Caco-2 (cell line): ENCODE measurements at regions of chr19 and their contacts with region 1.

Region 1: GRCh38 chr19:52748336-52748950 is 13.6 kb upstream of the ZNF611 start:
- DNase-seq: peak in 1 of 2 experiments; percentile 50
- H3K4me3 ChIP-seq: no peak overlapping the region
- H3K4me3 Mint-ChIP-seq: no peak overlapping the region
- H3K27ac Mint-ChIP-seq: no peak overlapping the region
- H3K4me1 ChIP-seq: peaks cover 5% of the 10 kb centered on the region; the same call in 1 of the 2 replicates
- H3K4me1 Mint-ChIP-seq: peaks cover 6% of the 10 kb centered on the region
- H3K27me3 ChIP-seq: no peaks in the 10 kb centered on the region
- H3K27me3 Mint-ChIP-seq: no peaks in the 10 kb centered on the region
- CTCF ChIP-seq: peak; percentile 16 to 41

Region 2: GRCh38 chr19:52248241-52248640 is 500.2 kb before region 1 on chr19:
- CTCF ChIA-PET with region 1: no interaction called
- POLR2A ChIA-PET with region 1: no interaction called
- intact Hi-C with region 1: loop called (anchors 10 kb)
- DNase-seq: peak; percentile 32 to 42
- H3K4me3 ChIP-seq: no peak overlapping the region
- H3K4me3 Mint-ChIP-seq: no peak overlapping the region
- H3K27ac Mint-ChIP-seq: no peak overlapping the region
- H3K4me1 ChIP-seq: no peaks in the 10 kb centered on the region
- H3K4me1 Mint-ChIP-seq: no peaks in the 10 kb centered on the region
- H3K27me3 ChIP-seq: no peaks in the 10 kb centered on the region
- H3K27me3 Mint-ChIP-seq: no peaks in the 10 kb centered on the region
- CTCF ChIP-seq: peak; percentile 10 to 15

Region 3: DNA sequence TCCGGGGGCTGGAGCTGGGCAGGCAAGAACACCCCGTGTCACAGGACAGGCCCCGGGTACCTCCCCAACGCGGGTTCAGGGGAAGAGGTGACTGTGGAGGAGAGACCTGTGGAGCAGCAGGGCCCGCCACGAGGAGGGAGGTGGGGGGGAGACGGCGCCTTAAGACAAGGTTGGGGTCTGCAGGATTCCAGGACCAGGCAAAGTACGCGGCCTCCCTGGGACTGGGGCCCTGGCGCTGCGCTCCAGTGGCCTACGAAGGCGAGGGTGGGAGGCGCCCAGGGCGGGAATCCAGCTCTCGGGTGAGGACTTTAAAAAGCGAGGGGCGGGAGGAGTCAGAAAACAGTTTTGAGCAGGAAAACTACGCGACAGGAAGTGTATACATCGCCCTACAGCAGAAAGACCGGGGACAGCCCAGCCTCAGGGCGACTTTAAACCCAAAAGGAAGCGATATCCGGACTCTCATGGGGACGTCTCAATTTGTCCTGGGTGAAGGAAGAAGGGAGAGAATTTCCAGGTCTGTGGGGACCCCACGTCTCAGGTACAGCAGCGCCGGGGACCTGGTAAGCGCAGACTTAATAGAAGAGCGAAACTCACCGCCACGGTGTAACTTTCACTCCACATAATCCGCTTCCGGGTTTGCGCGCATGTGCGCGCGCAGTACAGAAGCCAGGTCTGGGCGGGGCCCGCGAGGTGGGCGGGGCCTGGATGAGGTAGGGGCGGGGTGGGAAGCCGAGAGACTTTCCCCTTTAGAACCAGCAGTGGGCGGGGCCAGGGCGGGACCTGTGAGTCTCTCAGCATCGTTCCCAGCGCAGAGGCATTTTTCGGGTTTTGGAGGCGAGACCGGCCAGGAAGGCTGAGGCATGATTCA is 110.5 kb before region 1 on chr19 and contains the start of gene ZNF83:
- CTCF ChIA-PET with region 1: no interaction called
- POLR2A ChIA-PET with region 1: no interaction called
- intact Hi-C with region 1: loop called (anchors 1 kb)
- DNase-seq: peak; percentile 96 to 97
- H3K4me3 ChIP-seq: peak within 1 kb of the TSS; percentile 47
- H3K4me3 Mint-ChIP-seq: peak within 1 kb of the TSS; percentile 85
- H3K27ac Mint-ChIP-seq: peak within 1 kb of the TSS; percentile 93
- H3K4me1 ChIP-seq: peaks cover 5% of the 10 kb centered on the region; the same call in 1 of the 2 replicates
- H3K4me1 Mint-ChIP-seq: peaks cover 22% of the 10 kb centered on the region
- H3K27me3 ChIP-seq: no peaks in the 10 kb centered on the region
- H3K27me3 Mint-ChIP-seq: no peaks in the 10 kb centered on the region
- CTCF ChIP-seq: no peak
- total RNA-seq, gene ZNF83: 36.8 and 39.4 TPM in 2 replicates

Region 4: GRCh38 chr19:52679598-52679997 is 68.8 kb before region 1 on chr19:
- CTCF ChIA-PET with region 1: no interaction called
- POLR2A ChIA-PET with region 1: no interaction called
- intact Hi-C with region 1: no loop called
- DNase-seq: no peak
- H3K4me3 ChIP-seq: no peak overlapping the region
- H3K4me3 Mint-ChIP-seq: no peak overlapping the region
- H3K27ac Mint-ChIP-seq: no peak overlapping the region
- H3K4me1 ChIP-seq: no peaks in the 10 kb centered on the region
- H3K4me1 Mint-ChIP-seq: no peaks in the 10 kb centered on the region
- H3K27me3 ChIP-seq: no peaks in the 10 kb centered on the region
- H3K27me3 Mint-ChIP-seq: no peaks in the 10 kb centered on the region
- CTCF ChIP-seq: no peak